ENCODE measurements at regions of chr10 and their contacts with region 1.

Region 1: GRCh38 chr10:63261496-63261895 is 128.4 kb downstream of the NRBF2 start:
- DNase-seq: no peak
- H3K4me3 Mint-ChIP-seq: peak overlapping the region; percentile 16
- H3K27ac Mint-ChIP-seq: no peak overlapping the region
- H3K4me1 Mint-ChIP-seq: peaks cover 61% of the 10 kb centered on the region
- H3K27me3 Mint-ChIP-seq: no peaks in the 10 kb centered on the region

Region 2: DNA sequence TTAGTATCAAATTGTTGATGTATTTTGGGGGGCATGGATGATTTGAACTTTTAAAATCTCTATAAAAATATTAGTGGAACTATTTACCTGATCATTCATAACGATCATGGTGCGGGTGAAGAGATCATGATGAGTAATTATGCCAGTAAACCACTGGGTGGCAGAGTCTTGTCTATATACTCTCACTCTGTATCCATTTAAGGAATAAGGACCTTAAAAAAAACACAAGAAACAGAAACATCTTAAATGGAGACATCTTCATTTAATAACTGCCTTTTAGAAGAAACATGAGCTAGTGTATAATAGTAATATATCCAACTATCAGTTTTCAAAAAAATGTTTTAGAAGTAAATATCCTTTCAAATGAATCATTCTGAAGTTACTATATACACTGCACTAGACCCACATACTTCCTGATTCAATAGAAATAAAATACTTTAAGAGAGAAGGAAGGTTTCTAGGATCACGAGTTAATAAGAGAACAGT is 44.3 kb before region 1 on chr10:
- CTCF ChIA-PET with region 1: interaction called, 16 read pairs
- POLR2A ChIA-PET with region 1: no interaction called
- intact Hi-C with region 1: no loop called
- DNase-seq: no peak
- H3K4me3 Mint-ChIP-seq: no peak overlapping the region
- H3K27ac Mint-ChIP-seq: peak overlapping the region; percentile 42
- H3K4me1 Mint-ChIP-seq: peaks cover 55% of the 10 kb centered on the region
- H3K27me3 Mint-ChIP-seq: no peaks in the 10 kb centered on the region

Region 3: DNA sequence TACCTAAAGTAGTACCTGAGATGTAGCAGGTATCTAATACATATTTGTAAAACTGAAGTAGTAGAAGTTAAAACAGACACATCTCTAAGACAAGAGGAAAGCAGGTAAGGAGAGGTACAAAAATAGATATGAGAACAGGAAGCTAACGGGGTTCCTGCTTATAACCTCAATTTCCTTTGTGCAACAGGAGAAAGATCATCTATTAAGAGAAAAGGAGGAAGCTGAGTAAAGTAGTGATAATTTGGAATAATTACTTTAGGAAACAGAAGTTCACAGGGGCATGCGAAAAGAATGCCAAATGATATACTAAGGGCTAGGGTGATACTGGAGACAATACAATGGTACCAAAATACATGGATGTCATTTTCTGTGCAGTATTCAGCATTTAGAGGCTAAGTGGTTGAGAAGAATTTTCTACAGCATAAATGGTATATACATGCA is 19.6 kb before region 1 on chr10:
- CTCF ChIA-PET with region 1: no interaction called
- POLR2A ChIA-PET with region 1: interaction called, 8 read pairs
- intact Hi-C with region 1: loop called (anchors 2 kb)
- DNase-seq: no peak
- H3K4me3 Mint-ChIP-seq: peak overlapping the region; percentile 24
- H3K27ac Mint-ChIP-seq: peak overlapping the region; percentile 73
- H3K4me1 Mint-ChIP-seq: peaks cover 74% of the 10 kb centered on the region
- H3K27me3 Mint-ChIP-seq: no peaks in the 10 kb centered on the region

Measured in activated CD4-positive, alpha-beta memory T cell treated with anti-CD3 and anti-CD28 coated beads for 36 hours (primary cell).